ENCODE measurements at regions of chr3 and their contacts with region 1.

Region 1: GRCh38 chr3:59809710-59810444 is 760.1 kb upstream of the CFAP20DC start:
- DNase-seq: peak; percentile 64
- ATAC-seq: peak; percentile 50
- H3K4me3 ChIP-seq: no peak overlapping the region
- H3K27ac ChIP-seq: no peak overlapping the region
- H3K4me1 ChIP-seq: peaks cover 10% of the 10 kb centered on the region; the same call in 1 of the 2 replicates
- H3K27me3 ChIP-seq: no peaks in the 10 kb centered on the region
- CTCF ChIP-seq: peak; percentile 66

Region 2: GRCh38 chr3:58824285-58824684 is 985.6 kb before region 1 on chr3:
- CTCF ChIA-PET with region 1: no interaction called
- POLR2A ChIA-PET with region 1: no interaction called
- intact Hi-C with region 1: loop called (anchors 10 kb)
- DNase-seq: peak; percentile 81
- ATAC-seq: peak; percentile 81
- H3K4me3 ChIP-seq: no peak overlapping the region
- H3K27ac ChIP-seq: no peak overlapping the region
- H3K4me1 ChIP-seq: no peaks in the 10 kb centered on the region
- H3K27me3 ChIP-seq: no peaks in the 10 kb centered on the region
- CTCF ChIP-seq: peak; percentile 97

Region 3: GRCh38 chr3:59367150-59367549 is 442.7 kb before region 1 on chr3:
- CTCF ChIA-PET with region 1: no interaction called
- POLR2A ChIA-PET with region 1: no interaction called
- intact Hi-C with region 1: loop called (anchors 10 kb)
- DNase-seq: peak; percentile 60
- ATAC-seq: peak; percentile 63
- H3K4me3 ChIP-seq: no peak overlapping the region
- H3K27ac ChIP-seq: no peak overlapping the region
- H3K4me1 ChIP-seq: peaks cover 31% of the 10 kb centered on the region
- H3K27me3 ChIP-seq: no peaks in the 10 kb centered on the region
- CTCF ChIP-seq: no peak

Region 4: GRCh38 chr3:59796456-59796855 is 13.4 kb before region 1 on chr3:
- CTCF ChIA-PET with region 1: no interaction called
- POLR2A ChIA-PET with region 1: no interaction called
- intact Hi-C with region 1: no loop called
- DNase-seq: no peak
- ATAC-seq: no peak
- H3K4me3 ChIP-seq: no peak overlapping the region
- H3K27ac ChIP-seq: no peak overlapping the region
- H3K4me1 ChIP-seq: no peaks in the 10 kb centered on the region
- H3K27me3 ChIP-seq: no peaks in the 10 kb centered on the region
- CTCF ChIP-seq: no peak

Measured in PC-3 (cell line).